Head of caudate nucleus (tissue), 42 donors: ENCODE measurements at regions of chr17 and their contacts with region 1.

Region 1: DNA sequence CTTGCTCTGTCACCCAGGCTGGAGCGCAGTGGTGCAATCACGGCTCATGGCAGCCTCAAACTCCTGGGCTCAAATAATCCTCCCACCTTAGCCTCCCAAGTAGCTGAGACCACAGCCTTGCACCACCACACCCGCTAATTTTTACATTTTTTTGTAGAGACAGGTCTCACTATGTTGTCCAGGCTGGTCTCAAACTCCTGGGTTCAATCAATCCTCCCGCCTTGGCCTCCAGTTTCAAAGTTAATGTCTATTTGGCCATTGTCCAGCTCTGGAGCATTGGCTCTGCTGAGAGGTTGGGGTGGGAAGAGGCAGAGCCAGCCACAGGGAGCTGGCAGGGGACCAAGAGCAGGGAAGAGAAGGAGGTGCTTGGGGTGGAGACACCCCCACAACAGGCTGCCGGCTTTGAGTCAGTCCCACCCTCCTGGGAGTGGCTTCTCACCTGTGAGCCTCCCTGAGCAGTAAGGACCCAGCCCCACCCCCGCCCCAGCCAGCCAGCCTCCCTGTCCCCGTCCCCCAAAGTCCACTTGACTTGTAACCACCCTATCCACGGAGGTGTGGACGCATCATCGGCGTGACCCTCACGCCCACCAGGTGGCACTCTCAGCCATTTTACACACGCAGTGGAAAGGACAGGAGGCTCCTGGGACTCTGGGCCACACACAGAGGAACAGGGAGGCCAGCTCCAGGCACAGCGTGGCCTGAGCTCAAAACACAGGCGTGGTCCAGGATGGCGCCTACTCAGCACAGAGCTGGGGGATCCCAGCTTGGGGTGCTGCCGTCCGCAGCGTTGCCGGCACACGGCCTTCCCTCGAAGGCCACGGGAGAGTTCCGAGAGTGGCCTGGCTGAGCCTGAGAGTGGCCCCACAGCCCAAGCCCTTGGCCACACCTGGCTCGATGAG is 22.8 kb upstream of the PVALEF start:
- DNase-seq: peak; percentile 76 to 95 (median 86)

Region 2: GRCh38 chr17:81200695-81201580 is 58.4 kb after region 1 on chr17:
- intact Hi-C with region 1: loop called (anchors 10 kb)
- DNase-seq: peak; percentile 15 to 91 (median 69)